Vagina (tissue), 2 donors: ENCODE measurements at regions of chr20 and their contacts with region 1.

Region 1: DNA sequence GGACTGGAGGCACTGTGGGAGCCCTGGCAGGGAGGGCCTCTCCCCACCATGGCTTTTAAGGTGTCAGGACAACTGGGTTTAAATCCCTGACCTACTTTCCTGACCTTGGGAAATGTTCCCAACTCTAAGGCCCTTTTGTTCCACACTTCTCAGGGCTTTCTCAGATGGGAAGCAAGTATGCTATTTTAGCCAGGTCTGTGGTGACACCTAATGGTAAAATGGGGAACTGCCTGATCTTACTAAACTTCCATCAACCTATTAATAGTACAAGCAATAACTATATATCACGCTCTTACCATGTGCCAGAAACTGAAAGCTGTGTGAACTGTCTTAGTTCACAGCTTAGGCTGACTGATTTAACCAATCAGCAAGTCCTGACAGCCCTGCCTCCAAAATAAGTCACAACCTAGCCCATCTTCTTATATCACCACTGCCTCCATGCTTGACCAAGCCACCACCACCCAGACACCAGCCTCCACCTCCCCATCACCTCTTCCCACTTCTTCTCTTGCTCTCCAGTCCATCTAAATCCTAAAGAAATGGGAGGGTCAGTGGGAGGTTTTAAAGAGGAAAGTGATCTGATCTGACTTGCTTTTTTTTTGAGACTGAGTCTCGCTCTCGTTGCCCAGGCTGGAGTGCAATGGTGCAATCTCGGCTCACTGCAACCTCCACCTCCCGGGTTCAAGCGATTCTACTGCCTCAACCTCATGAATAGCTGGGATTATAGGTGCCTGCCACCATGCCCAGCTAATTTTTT is 6.9 kb upstream of the BLCAP start:
- DNase-seq: peak in 1 of 2 donors; percentile 83
- H3K4me3 ChIP-seq: no peak overlapping the region
- H3K27ac ChIP-seq: no peak overlapping the region
- H3K4me1 ChIP-seq: peaks cover under 1% of the 10 kb centered on the region
- H3K27me3 ChIP-seq: no peaks in the 10 kb centered on the region
- CTCF ChIP-seq: peak; percentile 68 to 93 (median 83)
- POLR2A ChIP-seq: no peak

Region 2: DNA sequence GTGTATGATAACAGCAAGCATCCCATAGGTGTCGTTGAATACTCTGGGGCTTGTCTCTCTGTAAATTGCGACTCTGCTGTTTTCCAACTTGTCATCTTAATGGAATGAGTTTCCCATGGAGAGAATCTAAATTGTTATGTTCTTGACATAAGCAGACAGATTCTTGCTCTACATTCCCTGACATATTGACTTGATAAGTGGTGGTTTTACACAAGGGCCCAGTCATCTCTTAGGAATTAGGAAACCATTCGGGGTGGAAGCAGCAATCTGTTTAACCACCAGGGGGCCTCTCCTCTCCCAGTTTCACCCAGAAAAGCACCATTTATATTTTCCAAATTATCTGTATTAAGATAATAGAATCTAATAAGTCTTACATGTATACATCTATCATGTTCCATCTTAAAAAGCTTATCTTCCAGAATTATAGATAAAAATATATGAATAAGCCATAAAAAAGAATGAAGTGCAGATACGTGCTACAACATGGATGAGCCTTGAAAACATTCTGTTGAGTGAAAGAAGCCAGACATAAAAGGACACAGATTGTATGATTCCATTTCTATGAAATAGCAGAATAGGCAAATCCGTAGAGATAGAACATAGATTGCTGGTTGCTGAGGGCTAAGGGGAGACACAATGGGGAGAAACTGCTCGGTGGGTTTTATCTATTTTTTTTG is 332.2 kb before region 1 on chr20:
- intact Hi-C with region 1: loop called (anchors 5 kb)
- DNase-seq: no peak
- H3K4me3 ChIP-seq: no peak overlapping the region
- H3K27ac ChIP-seq: peak overlapping the region; percentile 65
- H3K4me1 ChIP-seq: peaks cover 26% of the 10 kb centered on the region
- H3K27me3 ChIP-seq: no peaks in the 10 kb centered on the region
- CTCF ChIP-seq: peak; percentile 3 to 67 (median 47)
- POLR2A ChIP-seq: no peak

Region 3: DNA sequence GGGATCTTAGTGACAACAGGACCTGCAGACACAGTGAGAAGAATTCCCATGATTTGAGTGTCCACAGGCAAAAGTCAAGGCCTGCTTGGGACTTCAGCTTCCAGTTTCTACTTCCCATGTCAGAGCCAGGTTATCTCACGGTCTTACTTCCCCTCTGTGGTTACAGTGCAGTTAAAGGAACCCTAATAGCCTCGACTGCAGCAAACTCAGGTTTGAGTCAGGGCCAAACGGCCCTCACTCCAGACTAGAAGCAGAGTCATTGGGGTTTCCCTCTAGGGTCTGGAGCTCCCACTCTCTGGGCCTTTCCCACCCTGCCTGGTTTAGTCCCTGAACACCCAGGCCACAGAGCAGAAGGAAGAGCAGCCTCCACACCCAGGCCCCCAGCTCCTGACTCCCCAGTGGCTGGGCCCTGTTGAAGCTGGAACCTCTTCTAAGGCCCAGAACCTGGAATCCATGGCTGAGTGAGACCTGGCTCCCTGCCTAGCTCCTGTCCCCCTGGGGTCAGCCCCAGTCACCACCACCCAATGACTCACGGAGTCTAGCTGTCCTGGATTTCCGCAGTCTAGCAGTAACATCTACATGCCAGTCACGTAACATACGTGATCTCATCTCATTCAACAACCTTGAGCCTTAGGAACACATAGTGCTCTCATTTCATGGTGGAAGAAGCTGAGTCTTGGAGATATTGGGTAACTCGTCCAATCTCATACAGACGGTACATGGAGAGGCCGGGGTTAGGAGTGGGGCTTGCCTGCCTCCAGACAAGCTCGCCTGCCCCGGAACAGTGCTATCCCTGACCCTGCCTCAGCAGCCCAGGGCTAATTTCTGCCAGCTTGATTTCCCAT is 263.8 kb before region 1 on chr20:
- intact Hi-C with region 1: loop called (anchors 5 kb)
- DNase-seq: no peak
- H3K4me3 ChIP-seq: no peak overlapping the region
- H3K27ac ChIP-seq: no peak overlapping the region
- H3K4me1 ChIP-seq: peaks cover 7% of the 10 kb centered on the region
- H3K27me3 ChIP-seq: no peaks in the 10 kb centered on the region
- CTCF ChIP-seq: no peak
- POLR2A ChIP-seq: no peak